ENCODE measurements at regions of chr10 and their contacts with region 1.

Region 1: GRCh38 chr10:110137142-110137545 is 70.3 kb upstream of the MXI1 start:
- DNase-seq: peak in 5 of 35 experiments; percentile 4 to 75 (median 14)
- ATAC-seq: peak; percentile 58 to 69 (median 64)
- H3K4me3 ChIP-seq: no peak overlapping the region
- H3K4me3 Mint-ChIP-seq: no peak overlapping the region
- H3K27ac ChIP-seq: peak overlapping the region; percentile 39
- H3K27ac Mint-ChIP-seq: peak overlapping the region in 1 of 2 donors; percentile 21
- H3K4me1 ChIP-seq: peaks cover 3 to 5% of the 10 kb centered on the region in 2 experiments
- H3K4me1 Mint-ChIP-seq: peaks cover 28 to 29% (median 28%) of the 10 kb centered on the region in 3 donors
- H3K27me3 ChIP-seq: no peaks in the 10 kb centered on the region
- H3K27me3 Mint-ChIP-seq: no peaks in the 10 kb centered on the region

Region 2: DNA sequence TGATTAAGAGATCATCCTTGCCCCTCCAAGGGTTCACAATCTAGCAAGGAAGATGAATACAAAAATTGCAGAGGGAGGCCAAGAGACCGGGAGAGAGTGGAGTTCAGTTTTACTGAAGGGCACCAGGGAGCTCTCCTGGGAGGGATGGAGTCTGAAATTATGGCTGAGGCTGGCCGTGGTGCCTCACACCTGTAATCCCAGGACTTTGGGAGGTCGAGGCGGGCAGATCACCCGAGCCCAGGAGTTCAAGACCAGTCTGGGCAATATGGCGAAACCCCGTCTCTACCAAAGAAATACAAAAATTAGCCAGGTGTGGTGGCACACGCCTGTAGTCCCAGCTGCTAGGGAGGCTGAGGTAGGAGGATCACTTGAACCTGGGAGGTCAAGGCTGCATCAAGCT is 18.9 kb after region 1 on chr10:
- CTCF ChIA-PET with region 1: interaction called in 1 of 2 experiments, 22 read pairs
- POLR2A ChIA-PET with region 1: no interaction called
- DNase-seq: no peak
- ATAC-seq: no peak
- H3K4me3 ChIP-seq: no peak overlapping the region
- H3K4me3 Mint-ChIP-seq: peak overlapping the region in 1 of 3 donors; percentile 71
- H3K27ac ChIP-seq: no peak overlapping the region
- H3K27ac Mint-ChIP-seq: no peak overlapping the region
- H3K4me1 ChIP-seq: peaks cover 0 to 25% of the 10 kb centered on the region in 2 experiments
- H3K4me1 Mint-ChIP-seq: peaks cover 17 to 37% (median 23%) of the 10 kb centered on the region in 3 donors
- H3K27me3 ChIP-seq: peaks cover 8 to 64% of the 10 kb centered on the region in 2 experiments
- H3K27me3 Mint-ChIP-seq: peaks cover 57 to 78% of the 10 kb centered on the region in 2 donors

Region 3: DNA sequence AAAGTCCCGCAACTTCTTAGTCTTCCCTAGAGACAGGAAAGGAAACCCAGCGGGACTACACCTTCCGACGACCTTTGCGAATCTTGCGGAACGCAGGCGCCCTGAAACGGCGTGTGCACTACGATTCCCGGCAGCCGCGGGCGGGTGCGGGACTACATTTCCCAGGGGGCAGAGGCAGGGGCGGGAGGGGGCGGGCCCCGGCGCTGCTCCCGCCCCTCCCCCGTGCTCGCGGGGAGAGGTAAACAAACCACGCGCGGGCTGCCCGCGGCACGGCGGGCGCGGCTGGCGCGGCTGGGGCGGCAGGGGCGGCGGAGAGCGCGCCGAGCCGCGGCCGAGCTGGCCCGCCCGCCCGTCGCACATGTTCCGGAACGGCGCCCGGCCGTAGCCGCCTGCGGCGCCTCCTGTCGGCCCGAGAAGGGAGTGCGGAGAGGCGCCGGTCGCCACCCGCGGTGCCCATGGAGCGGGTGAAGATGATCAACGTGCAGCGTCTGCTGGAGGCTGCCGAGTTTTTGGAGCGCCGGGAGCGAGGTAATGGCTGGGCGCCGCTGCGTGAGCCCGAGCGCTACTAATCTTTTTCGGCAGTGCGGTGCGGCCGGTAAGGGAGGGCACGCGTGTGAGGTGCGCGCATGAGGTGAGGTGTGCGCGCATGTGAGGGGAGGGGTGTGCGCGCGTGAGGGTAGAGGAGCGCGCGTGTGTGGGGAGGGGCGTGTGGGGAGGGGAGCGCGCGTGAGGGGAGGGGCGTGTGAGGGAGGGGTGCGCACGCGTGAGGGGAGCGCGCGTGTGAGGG is 88.8 kb after region 1 on chr10:
- CTCF ChIA-PET with region 1: interaction called, 12 to 24 read pairs
- POLR2A ChIA-PET with region 1: interaction called in 1 of 2 experiments, 6 read pairs
- DNase-seq: peak; percentile 78 to 95 (median 86)
- ATAC-seq: peak; percentile 71 to 83 (median 81)
- H3K4me3 ChIP-seq: peak overlapping the region; percentile 62 to 87
- H3K4me3 Mint-ChIP-seq: peak overlapping the region; percentile 92 to 94 (median 93)
- H3K27ac ChIP-seq: peak overlapping the region; percentile 65
- H3K27ac Mint-ChIP-seq: peak overlapping the region; percentile 92 to 95
- H3K4me1 ChIP-seq: peaks cover 12 to 24% of the 10 kb centered on the region in 2 experiments
- H3K4me1 Mint-ChIP-seq: peaks cover 40 to 53% (median 46%) of the 10 kb centered on the region in 3 donors
- H3K27me3 ChIP-seq: no peaks in the 10 kb centered on the region
- H3K27me3 Mint-ChIP-seq: no peaks in the 10 kb centered on the region

Region 4: DNA sequence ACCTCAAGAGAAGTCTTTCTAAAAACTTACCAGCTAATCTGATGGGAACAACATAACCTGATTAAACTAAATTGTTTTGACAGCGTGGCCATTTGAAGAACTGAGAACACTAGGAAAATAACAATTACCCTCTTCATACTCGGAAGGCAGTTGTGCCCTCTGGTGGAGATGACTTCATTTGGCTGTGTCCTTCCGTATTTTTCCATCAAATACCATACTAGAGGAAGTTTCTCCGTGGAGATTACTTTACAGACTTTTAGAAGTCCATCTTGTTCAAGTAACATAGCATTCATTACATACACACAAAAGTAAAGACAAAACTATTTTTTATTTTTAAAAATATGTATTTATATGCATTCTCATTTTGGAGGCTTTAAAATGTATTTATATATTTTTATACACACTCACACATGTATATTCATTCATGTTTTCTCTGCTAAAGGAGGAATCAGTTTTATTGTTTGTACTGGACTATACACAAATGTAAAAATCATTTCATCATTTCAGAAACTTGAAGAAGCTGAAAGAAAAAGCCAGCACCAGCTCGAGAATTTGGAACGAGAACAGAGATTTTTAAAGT is 142.4 kb after region 1 on chr10:
- CTCF ChIA-PET with region 1: interaction called, 16 to 43 read pairs
- POLR2A ChIA-PET with region 1: interaction called in 1 of 2 experiments, 3 read pairs
- DNase-seq: peak in 33 of 35 experiments; percentile 3 to 78 (median 31)
- ATAC-seq: peak in 2 of 4 experiments; percentile 36 to 82
- H3K4me3 ChIP-seq: no peak overlapping the region
- H3K4me3 Mint-ChIP-seq: peak overlapping the region in 1 of 3 donors; percentile 23
- H3K27ac ChIP-seq: no peak overlapping the region
- H3K27ac Mint-ChIP-seq: no peak overlapping the region
- H3K4me1 ChIP-seq: peaks cover 1 to 3% of the 10 kb centered on the region in 2 experiments
- H3K4me1 Mint-ChIP-seq: peaks cover 21 to 43% (median 32%) of the 10 kb centered on the region in 3 donors
- H3K27me3 ChIP-seq: no peaks in the 10 kb centered on the region
- H3K27me3 Mint-ChIP-seq: no peaks in the 10 kb centered on the region

Region 5: DNA sequence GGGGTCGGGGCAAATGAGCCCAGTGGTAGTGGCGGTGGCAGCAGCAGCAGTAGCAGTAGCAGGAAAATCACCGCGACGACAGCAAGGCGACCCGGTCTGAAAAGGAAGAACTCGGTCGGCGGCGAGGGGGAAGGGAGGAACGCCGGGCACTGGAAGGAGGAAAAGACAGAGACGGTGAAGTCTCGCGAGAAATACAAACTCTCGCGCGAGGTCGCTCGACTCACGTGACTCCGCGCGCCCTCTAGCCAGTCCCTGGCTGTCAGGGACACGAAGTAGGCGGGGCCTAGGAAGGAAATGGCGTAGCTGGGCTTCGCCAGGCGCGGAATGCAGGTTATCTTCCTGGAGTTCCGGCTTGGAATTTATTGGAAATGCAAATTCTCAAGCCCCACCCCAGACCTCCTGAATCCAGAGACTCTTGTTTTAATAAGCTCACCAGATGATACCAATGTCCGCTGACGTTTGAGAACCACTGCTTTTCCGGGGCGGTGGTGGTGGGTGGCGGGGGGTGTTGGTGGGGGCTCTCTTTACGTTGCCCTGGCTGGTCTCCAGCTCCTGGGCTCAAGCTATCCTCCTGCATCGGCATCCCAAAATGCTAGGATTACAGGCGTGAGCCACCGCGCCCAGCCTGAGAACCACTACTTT is 167.8 kb after region 1 on chr10 and contains the start of gene SMNDC1:
- CTCF ChIA-PET with region 1: interaction called, 3 to 11 read pairs
- POLR2A ChIA-PET with region 1: interaction called, 3 to 6 read pairs
- DNase-seq: peak; percentile 91 to 99 (median 95)
- ATAC-seq: peak; percentile 92 to 94 (median 92)
- H3K4me3 ChIP-seq: peak within 1 kb of the TSS; percentile 64 to 85
- H3K4me3 Mint-ChIP-seq: peak within 1 kb of the TSS; percentile 89 to 96 (median 94)
- H3K27ac ChIP-seq: peak within 1 kb of the TSS; percentile 83
- H3K27ac Mint-ChIP-seq: peak within 1 kb of the TSS; percentile 98 to 100
- H3K4me1 ChIP-seq: peaks cover 18 to 36% of the 10 kb centered on the region in 2 experiments
- H3K4me1 Mint-ChIP-seq: peaks cover 47 to 56% (median 55%) of the 10 kb centered on the region in 3 donors
- H3K27me3 ChIP-seq: no peaks in the 10 kb centered on the region
- H3K27me3 Mint-ChIP-seq: no peaks in the 10 kb centered on the region
- total RNA-seq, gene SMNDC1: 33.5 to 42.2 (median 34.1) TPM